CD8-positive, alpha-beta T cell (primary cell): ENCODE measurements at regions of chr4 and their contacts with region 1.

Region 1: DNA sequence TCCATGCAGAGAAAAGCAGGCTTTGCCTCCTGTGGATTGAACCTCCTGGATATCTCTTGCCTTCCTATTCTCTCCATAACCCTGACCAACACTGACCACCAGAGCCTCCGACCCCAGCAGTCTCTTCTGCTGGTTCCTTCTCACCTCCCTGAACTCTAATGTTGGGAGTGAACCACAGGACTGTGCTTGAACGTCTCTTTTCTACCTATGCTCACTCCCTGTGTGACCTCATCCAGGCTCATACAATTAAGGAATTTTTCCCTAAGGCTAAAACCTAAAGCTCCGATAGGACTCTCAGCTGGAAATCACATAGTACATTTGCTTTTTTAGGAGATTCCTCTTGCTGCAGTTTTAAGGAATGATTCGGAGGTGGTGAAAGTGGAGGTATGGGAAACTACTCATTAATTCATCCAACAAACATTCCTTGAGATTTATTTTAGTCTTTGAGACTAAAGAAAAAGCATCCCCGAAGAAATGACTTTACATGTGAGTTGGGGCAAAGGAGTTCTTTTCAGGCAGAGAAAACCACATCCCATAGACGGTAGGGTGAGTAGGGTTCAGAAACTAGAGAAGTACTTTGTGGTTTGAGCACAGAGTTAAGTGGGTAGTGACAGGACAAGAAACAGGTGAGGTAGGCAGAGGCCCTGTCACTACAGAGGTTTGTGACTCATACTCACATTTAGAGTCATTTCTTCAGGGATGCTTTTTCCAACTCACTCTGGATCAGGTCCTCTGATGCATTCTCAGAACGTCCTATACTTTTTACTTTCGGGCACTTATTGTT is 30.8 kb downstream of the NDNF start:
- DNase-seq: peak in 2 of 9 experiments; percentile 31 to 58
- ATAC-seq: peak; percentile 98
- H3K4me3 ChIP-seq: no peak overlapping the region
- H3K4me3 Mint-ChIP-seq: no peak overlapping the region
- H3K27ac ChIP-seq: peak overlapping the region in 1 of 2 experiments; percentile 6
- H3K27ac Mint-ChIP-seq: peak overlapping the region; percentile 1
- H3K4me1 ChIP-seq: peaks cover 27% of the 10 kb centered on the region
- H3K4me1 Mint-ChIP-seq: peaks cover 23% of the 10 kb centered on the region
- H3K27me3 ChIP-seq: no peaks in the 10 kb centered on the region
- H3K27me3 Mint-ChIP-seq: no peaks in the 10 kb centered on the region
- CTCF ChIP-seq: no peak

Region 2: GRCh38 chr4:120940547-120940946 is 101.0 kb before region 1 on chr4:
- CTCF ChIA-PET with region 1: no interaction called
- POLR2A ChIA-PET with region 1: no interaction called
- intact Hi-C with region 1: loop called in 1 of 2 experiments (anchors 5 kb)
- DNase-seq: no peak
- ATAC-seq: no peak
- H3K4me3 ChIP-seq: no peak overlapping the region
- H3K4me3 Mint-ChIP-seq: no peak overlapping the region
- H3K27ac ChIP-seq: no peak overlapping the region
- H3K27ac Mint-ChIP-seq: no peak overlapping the region
- H3K4me1 ChIP-seq: no peaks in the 10 kb centered on the region
- H3K4me1 Mint-ChIP-seq: no peaks in the 10 kb centered on the region
- H3K27me3 ChIP-seq: no peaks in the 10 kb centered on the region
- H3K27me3 Mint-ChIP-seq: peaks cover 3% of the 10 kb centered on the region
- CTCF ChIP-seq: no peak

Region 3: GRCh38 chr4:121009578-121010478 is 31.7 kb before region 1 on chr4:
- CTCF ChIA-PET with region 1: no interaction called
- POLR2A ChIA-PET with region 1: no interaction called
- intact Hi-C with region 1: loop called in 1 of 2 experiments (anchors 2 kb)
- DNase-seq: peak in 2 of 9 experiments; percentile 41 to 67
- ATAC-seq: peak; percentile 94
- H3K4me3 ChIP-seq: no peak overlapping the region
- H3K4me3 Mint-ChIP-seq: peak overlapping the region; percentile 60
- H3K27ac ChIP-seq: peak overlapping the region; percentile 0 to 24
- H3K27ac Mint-ChIP-seq: peak overlapping the region; percentile 92
- H3K4me1 ChIP-seq: peaks cover 81% of the 10 kb centered on the region
- H3K4me1 Mint-ChIP-seq: peaks cover 87% of the 10 kb centered on the region
- H3K27me3 ChIP-seq: no peaks in the 10 kb centered on the region
- H3K27me3 Mint-ChIP-seq: no peaks in the 10 kb centered on the region
- CTCF ChIP-seq: no peak